ENCODE measurements at regions of chr1 and their contacts with region 1.

Region 1: GRCh38 chr1:78839704-78840277 is 166.7 kb downstream of the ADGRL4 start:
- DNase-seq: peak in 1 of 2 experiments; percentile 29
- ATAC-seq: no peak; a peak in 1 of 6 replicates
- H3K4me3 ChIP-seq: no peak overlapping the region
- H3K27ac ChIP-seq: no peak overlapping the region
- H3K4me1 ChIP-seq: peaks cover 9% of the 10 kb centered on the region; the same call in 1 of the 3 replicates
- CTCF ChIP-seq: peak; percentile 71
- EP300 ChIP-seq: no peak
- POLR2A ChIP-seq: no peak
- RAD21 ChIP-seq: peak; percentile 69 to 86

Region 2: GRCh38 chr1:79197421-79197820 is 357.6 kb after region 1 on chr1:
- CTCF ChIA-PET with region 1: interaction called, 34 read pairs
- POLR2A ChIA-PET with region 1: no interaction called
- DNase-seq: peak in 1 of 2 experiments; percentile 47
- ATAC-seq: 0 out of 6 replicates have a peak, but pooled peaks of 1 of the 2 experiments have one; percentile 62
- H3K4me3 ChIP-seq: no peak overlapping the region
- H3K27ac ChIP-seq: 0 out of 6 replicates have a peak overlapping the region, but pooled peaks of 1 of the 2 experiments have one; percentile 38
- H3K4me1 ChIP-seq: peaks cover 15% of the 10 kb centered on the region
- CTCF ChIP-seq: peak; percentile 53
- EP300 ChIP-seq: no peak
- POLR2A ChIP-seq: no peak
- RAD21 ChIP-seq: peak; percentile 72 to 83

Region 3: GRCh38 chr1:79283456-79283855 is 443.7 kb after region 1 on chr1:
- CTCF ChIA-PET with region 1: no interaction called
- POLR2A ChIA-PET with region 1: no interaction called
- DNase-seq: no peak
- ATAC-seq: no peak
- H3K4me3 ChIP-seq: no peak overlapping the region
- H3K27ac ChIP-seq: no peak overlapping the region
- H3K4me1 ChIP-seq: no peaks in the 10 kb centered on the region
- CTCF ChIP-seq: no peak
- EP300 ChIP-seq: no peak
- POLR2A ChIP-seq: no peak
- RAD21 ChIP-seq: no peak